Activated naive CD4-positive, alpha-beta T cell treated with anti-CD3 and anti-CD28 coated beads for 36 hours (primary cell): ENCODE measurements at regions of chr1 and their contacts with region 1.

Region 1: DNA sequence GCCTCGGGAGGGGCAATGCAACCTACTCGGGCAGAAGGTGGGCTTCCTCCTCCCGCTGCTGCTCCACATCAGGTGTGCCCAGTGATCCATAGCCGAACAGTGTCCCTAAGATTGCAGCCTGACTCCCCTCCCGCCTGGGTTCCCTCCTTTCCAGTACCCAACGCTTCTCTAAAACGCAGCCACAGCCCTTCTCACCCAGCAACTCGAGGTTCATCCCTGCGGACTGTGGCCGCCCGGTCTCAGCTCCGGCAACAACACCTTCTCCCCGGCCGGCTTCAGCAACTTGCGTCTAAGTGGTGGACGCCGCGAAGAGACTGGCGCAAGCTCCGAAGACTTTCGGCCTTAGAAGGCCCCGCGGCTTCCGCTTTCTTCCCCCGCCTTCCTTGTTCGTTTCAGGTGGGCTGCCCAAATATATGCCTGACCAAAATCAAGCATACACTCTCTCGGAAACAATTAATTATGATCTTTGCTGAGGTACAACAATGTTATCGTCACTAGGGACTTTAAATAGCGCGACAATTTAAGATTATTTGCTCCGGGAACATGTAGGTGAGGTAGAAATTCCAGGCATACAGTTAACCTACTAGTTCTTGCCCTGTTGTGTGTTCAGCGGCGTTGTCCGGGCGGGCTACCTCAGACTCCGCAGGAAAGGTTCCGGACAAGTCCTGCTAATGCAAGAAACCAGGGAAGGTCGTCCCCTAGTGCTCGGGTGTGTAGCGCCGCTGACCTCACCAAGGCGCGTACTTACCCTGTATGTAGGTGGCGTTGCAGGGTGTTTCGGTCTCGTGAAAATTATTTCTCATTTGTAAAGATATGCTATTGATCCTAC is at the start of gene RBBP5:
- DNase-seq: peak; percentile 98
- H3K4me3 Mint-ChIP-seq: peak within 1 kb of the TSS; percentile 93
- H3K27ac Mint-ChIP-seq: peak within 1 kb of the TSS; percentile 98
- H3K4me1 Mint-ChIP-seq: peaks cover 32% of the 10 kb centered on the region
- H3K27me3 Mint-ChIP-seq: no peaks in the 10 kb centered on the region
- total RNA-seq, gene RBBP5: 26.0 to 27.5 TPM

Region 2: GRCh38 chr1:204516180-204516879 is 605.5 kb before region 1 on chr1 and contains the start of gene MDM4:
- CTCF ChIA-PET with region 1: no interaction called
- intact Hi-C with region 1: loop called (anchors 10 kb)
- DNase-seq: peak; percentile 97
- H3K4me3 Mint-ChIP-seq: no peak within 1 kb of the TSS
- H3K27ac Mint-ChIP-seq: peak within 1 kb of the TSS; percentile 72
- H3K4me1 Mint-ChIP-seq: peaks cover 59% of the 10 kb centered on the region
- H3K27me3 Mint-ChIP-seq: no peaks in the 10 kb centered on the region
- total RNA-seq, gene MDM4: 109 TPM

Region 3: GRCh38 chr1:205141236-205142101 is 19.6 kb after region 1 on chr1:
- CTCF ChIA-PET with region 1: interaction called, 12 read pairs
- intact Hi-C with region 1: loop called (anchors 1 kb)
- DNase-seq: peak; percentile 92
- H3K4me3 Mint-ChIP-seq: no peak overlapping the region
- H3K27ac Mint-ChIP-seq: no peak overlapping the region
- H3K4me1 Mint-ChIP-seq: peaks cover 7% of the 10 kb centered on the region
- H3K27me3 Mint-ChIP-seq: no peaks in the 10 kb centered on the region

Region 4: GRCh38 chr1:205199090-205199930 is 77.4 kb after region 1 on chr1:
- CTCF ChIA-PET with region 1: no interaction called
- intact Hi-C with region 1: loop called (anchors 5 kb)
- DNase-seq: peak; percentile 74
- H3K4me3 Mint-ChIP-seq: peak overlapping the region; percentile 66
- H3K27ac Mint-ChIP-seq: peak overlapping the region; percentile 97
- H3K4me1 Mint-ChIP-seq: peaks cover 78% of the 10 kb centered on the region
- H3K27me3 Mint-ChIP-seq: no peaks in the 10 kb centered on the region

Region 5: DNA sequence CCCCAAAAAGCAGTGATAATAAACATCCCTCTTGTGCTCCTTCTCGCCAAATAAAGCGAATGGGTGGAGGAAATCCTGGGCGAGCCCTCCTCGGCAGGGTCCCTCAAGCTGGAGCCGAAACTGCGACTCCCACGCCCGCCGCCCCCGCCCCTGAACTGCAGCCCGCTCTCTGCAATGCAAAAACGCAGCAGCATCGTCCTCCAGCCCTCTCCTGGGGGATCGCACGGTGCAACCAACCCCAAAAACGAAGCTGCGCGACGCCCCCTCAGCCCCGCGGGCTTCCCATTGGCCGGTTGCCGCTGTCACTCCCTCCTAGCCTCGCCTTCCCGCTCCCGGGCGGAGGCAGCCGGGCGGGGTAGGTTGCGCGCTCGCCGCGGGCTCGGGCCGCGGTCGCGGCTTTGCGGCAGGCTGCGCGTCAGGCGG is 105.7 kb after region 1 on chr1 and contains the start of gene TMCC2:
- CTCF ChIA-PET with region 1: interaction called, 3 read pairs
- intact Hi-C with region 1: loop called (anchors 1 kb)
- DNase-seq: peak; percentile 89
- H3K4me3 Mint-ChIP-seq: peak within 1 kb of the TSS; percentile 96
- H3K27ac Mint-ChIP-seq: peak within 1 kb of the TSS; percentile 93
- H3K4me1 Mint-ChIP-seq: peaks cover 25% of the 10 kb centered on the region
- H3K27me3 Mint-ChIP-seq: peaks cover 16% of the 10 kb centered on the region
- total RNA-seq, gene TMCC2: 42.5 to 44.8 TPM

Region 6: DNA sequence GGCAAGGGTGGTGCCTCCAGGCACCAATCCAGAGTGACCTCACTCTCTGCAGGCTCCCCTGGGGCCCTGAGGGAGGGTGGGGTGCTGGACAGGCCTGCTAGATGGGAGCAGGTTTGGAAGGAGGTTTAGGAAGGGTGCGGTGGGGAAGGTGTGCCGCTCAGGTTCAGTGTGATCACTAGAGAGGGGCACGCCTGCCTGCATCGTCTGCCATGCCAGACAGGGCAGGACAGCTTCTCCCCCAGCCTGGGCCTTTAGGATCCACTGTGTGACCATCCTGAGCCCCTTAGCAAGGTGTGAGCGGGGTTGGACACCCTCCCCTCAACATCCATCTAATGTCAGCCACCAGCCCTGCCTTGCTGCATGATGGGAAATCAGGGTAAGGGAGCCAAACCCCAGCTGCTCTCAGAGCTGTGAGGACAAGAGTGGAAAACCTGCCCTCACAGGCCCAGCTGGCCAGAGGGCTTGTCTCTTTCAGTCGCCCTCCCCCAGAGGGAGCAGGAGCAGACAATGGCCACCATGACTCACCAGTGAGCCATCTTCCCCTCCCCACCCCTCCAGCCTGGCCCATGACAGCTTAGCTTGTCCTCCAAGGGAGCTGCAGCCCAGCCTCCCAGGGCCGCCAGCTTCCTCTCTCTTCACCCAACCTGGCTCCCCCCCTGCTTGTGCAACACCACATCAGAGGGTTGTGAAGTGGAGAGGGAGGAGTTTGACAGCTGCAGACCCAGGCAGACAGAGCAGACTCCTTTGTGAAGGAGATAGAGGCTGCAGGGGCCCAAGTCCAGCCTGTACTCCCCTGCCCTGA is 162.7 kb after region 1 on chr1:
- CTCF ChIA-PET with region 1: no interaction called
- intact Hi-C with region 1: loop called (anchors 1 kb)
- DNase-seq: peak; percentile 97
- H3K4me3 Mint-ChIP-seq: peak overlapping the region; percentile 29
- H3K27ac Mint-ChIP-seq: peak overlapping the region; percentile 87
- H3K4me1 Mint-ChIP-seq: peaks cover 77% of the 10 kb centered on the region
- H3K27me3 Mint-ChIP-seq: no peaks in the 10 kb centered on the region

Region 7: GRCh38 chr1:205440476-205441317 is 318.8 kb after region 1 on chr1:
- CTCF ChIA-PET with region 1: no interaction called
- intact Hi-C with region 1: loop called (anchors 2 kb)
- DNase-seq: peak; percentile 93
- H3K4me3 Mint-ChIP-seq: peak overlapping the region; percentile 72
- H3K27ac Mint-ChIP-seq: peak overlapping the region; percentile 77
- H3K4me1 Mint-ChIP-seq: peaks cover 15% of the 10 kb centered on the region
- H3K27me3 Mint-ChIP-seq: no peaks in the 10 kb centered on the region